ENCODE measurements at regions of chr7 and their contacts with region 1.

Region 1: DNA sequence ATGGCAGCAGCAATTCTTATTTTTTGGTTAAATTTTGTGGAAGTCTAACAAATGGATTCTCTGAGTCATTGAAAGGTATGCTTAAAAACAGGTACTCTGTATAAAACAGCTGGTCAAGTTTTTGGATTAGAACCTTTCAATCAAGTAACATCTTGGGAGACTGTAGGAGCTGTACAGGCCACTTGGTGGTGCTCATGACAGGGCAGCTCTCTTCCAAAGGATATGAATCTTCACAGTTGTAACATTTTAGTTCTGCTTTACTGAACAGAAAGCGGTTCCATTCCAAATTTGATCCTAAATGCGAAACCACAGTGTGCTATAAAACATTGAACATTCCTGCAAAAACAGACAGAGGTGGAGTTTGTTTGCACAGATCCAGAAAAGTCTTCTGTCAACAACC is 44.5 kb upstream of the AGR3 start:
- DNase-seq: peak; percentile 62 to 64
- H3K4me3 ChIP-seq: no peak overlapping the region
- H3K27ac ChIP-seq: peak overlapping the region in 1 of 3 donors; percentile 10
- H3K4me1 ChIP-seq: peaks cover 6 to 22% of the 10 kb centered on the region in 2 donors
- H3K27me3 ChIP-seq: no peaks in the 10 kb centered on the region
- CTCF ChIP-seq: peak; percentile 59 to 87 (median 84)
- POLR2A ChIP-seq: no peak

Region 2: DNA sequence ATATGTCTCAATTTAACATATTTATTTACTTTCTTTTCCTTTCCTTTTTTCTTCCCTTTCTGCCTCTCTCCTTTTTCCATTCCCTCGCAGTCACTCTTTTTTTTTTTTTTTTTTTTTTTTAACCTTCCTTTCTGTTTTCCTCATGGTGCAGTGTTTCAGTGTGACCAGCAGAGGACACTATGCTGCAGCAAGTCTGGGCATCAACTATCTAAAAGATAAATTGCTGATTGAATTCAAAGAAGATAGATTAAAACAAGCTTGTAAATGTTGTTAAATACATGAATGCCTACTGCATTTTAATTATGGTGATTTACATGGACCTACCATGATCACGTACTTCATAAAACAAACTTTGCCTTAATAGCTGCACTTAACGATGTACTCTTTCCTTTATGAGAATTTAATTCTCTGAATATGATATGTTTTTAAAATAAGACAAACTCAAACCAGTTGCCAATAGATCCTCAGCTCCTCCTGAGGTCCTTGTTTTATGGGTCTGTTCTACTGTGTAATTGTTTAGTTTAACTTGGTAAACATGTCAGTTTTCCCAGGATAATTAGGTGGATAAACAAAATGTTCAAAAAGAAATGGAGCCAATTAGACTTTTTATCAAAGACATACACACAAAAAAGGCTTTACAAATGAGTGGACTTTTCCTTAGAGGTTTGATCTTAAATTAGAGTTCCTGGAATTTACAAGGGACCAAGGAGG is 56.5 kb after region 1 on chr7:
- intact Hi-C with region 1: loop called (anchors 10 kb)
- DNase-seq: peak; percentile 20 to 30
- H3K4me3 ChIP-seq: no peak overlapping the region
- H3K27ac ChIP-seq: peak overlapping the region in 1 of 3 donors; percentile 37
- H3K4me1 ChIP-seq: peaks cover 17 to 35% of the 10 kb centered on the region in 2 donors
- H3K27me3 ChIP-seq: no peaks in the 10 kb centered on the region
- CTCF ChIP-seq: peak; percentile 75 to 99 (median 85)
- POLR2A ChIP-seq: no peak

Region 3: GRCh38 chr7:17130281-17131059 is 204.2 kb after region 1 on chr7:
- intact Hi-C with region 1: no loop called
- DNase-seq: no peak
- H3K4me3 ChIP-seq: no peak overlapping the region
- H3K27ac ChIP-seq: peak overlapping the region in 1 of 3 donors; percentile 35
- H3K4me1 ChIP-seq: peaks cover 0 to 7% of the 10 kb centered on the region in 2 donors
- H3K27me3 ChIP-seq: no peaks in the 10 kb centered on the region
- CTCF ChIP-seq: no peak
- POLR2A ChIP-seq: no peak

Region 4: GRCh38 chr7:17301471-17302456 is 375.5 kb after region 1 on chr7:
- intact Hi-C with region 1: loop called (anchors 10 kb)
- DNase-seq: peak; percentile 41
- H3K4me3 ChIP-seq: peak overlapping the region in 1 of 3 donors; percentile 91
- H3K27ac ChIP-seq: peak overlapping the region in 2 of 3 donors; percentile 42 to 89
- H3K4me1 ChIP-seq: peaks cover 13 to 25% of the 10 kb centered on the region in 2 donors
- H3K27me3 ChIP-seq: no peaks in the 10 kb centered on the region
- CTCF ChIP-seq: peak in 5 of 6 experiments; percentile 44 to 69 (median 57)
- POLR2A ChIP-seq: no peak

Measured in thyroid gland (tissue), 4 donors.